Activated CD4-positive, alpha-beta memory T cell treated with anti-CD3 and anti-CD28 coated beads for 36 hours (primary cell): ENCODE measurements at regions of chr22 and their contacts with region 1.

Region 1: GRCh38 chr22:50507991-50508884 is at the start of gene NCAPH2:
- DNase-seq: peak; percentile 99
- H3K4me3 Mint-ChIP-seq: peak within 1 kb of the TSS; percentile 97
- H3K27ac Mint-ChIP-seq: peak within 1 kb of the TSS; percentile 97
- H3K4me1 Mint-ChIP-seq: peaks cover 20% of the 10 kb centered on the region
- H3K27me3 Mint-ChIP-seq: no peaks in the 10 kb centered on the region
- total RNA-seq, gene NCAPH2: 134 to 138 TPM

Region 2: GRCh38 chr22:50244420-50245213 is 263.6 kb before region 1 on chr22 and contains the start of gene TUBGCP6:
- CTCF ChIA-PET with region 1: interaction called, 3 read pairs
- POLR2A ChIA-PET with region 1: interaction called, 4 read pairs
- intact Hi-C with region 1: loop called (anchors 2 kb)
- DNase-seq: peak; percentile 95
- H3K4me3 Mint-ChIP-seq: peak within 1 kb of the TSS; percentile 91
- H3K27ac Mint-ChIP-seq: peak within 1 kb of the TSS; percentile 90
- H3K4me1 Mint-ChIP-seq: peaks cover 41% of the 10 kb centered on the region
- H3K27me3 Mint-ChIP-seq: no peaks in the 10 kb centered on the region
- total RNA-seq, gene TUBGCP6: 41.4 to 43.8 TPM

Region 3: GRCh38 chr22:50250555-50251476 is 257.4 kb before region 1 on chr22 and contains the start of gene HDAC10:
- CTCF ChIA-PET with region 1: no interaction called
- POLR2A ChIA-PET with region 1: interaction called, 10 read pairs
- intact Hi-C with region 1: no loop called
- DNase-seq: peak; percentile 91
- H3K4me3 Mint-ChIP-seq: peak within 1 kb of the TSS; percentile 84
- H3K27ac Mint-ChIP-seq: peak within 1 kb of the TSS; percentile 51
- H3K4me1 Mint-ChIP-seq: peaks cover 24% of the 10 kb centered on the region
- H3K27me3 Mint-ChIP-seq: no peaks in the 10 kb centered on the region
- total RNA-seq, gene HDAC10: 46.1 to 47.6 TPM

Region 4: GRCh38 chr22:50474668-50475492 is 33.4 kb before region 1 on chr22 and contains the start of gene SBF1:
- CTCF ChIA-PET with region 1: interaction called, 5 read pairs
- POLR2A ChIA-PET with region 1: interaction called, 7 read pairs
- intact Hi-C with region 1: loop called (anchors 2 kb)
- DNase-seq: peak; percentile 93
- H3K4me3 Mint-ChIP-seq: peak within 1 kb of the TSS; percentile 95
- H3K27ac Mint-ChIP-seq: peak within 1 kb of the TSS; percentile 78
- H3K4me1 Mint-ChIP-seq: peaks cover 47% of the 10 kb centered on the region
- H3K27me3 Mint-ChIP-seq: no peaks in the 10 kb centered on the region
- total RNA-seq, gene SBF1: 110 to 112 TPM

Region 5: DNA sequence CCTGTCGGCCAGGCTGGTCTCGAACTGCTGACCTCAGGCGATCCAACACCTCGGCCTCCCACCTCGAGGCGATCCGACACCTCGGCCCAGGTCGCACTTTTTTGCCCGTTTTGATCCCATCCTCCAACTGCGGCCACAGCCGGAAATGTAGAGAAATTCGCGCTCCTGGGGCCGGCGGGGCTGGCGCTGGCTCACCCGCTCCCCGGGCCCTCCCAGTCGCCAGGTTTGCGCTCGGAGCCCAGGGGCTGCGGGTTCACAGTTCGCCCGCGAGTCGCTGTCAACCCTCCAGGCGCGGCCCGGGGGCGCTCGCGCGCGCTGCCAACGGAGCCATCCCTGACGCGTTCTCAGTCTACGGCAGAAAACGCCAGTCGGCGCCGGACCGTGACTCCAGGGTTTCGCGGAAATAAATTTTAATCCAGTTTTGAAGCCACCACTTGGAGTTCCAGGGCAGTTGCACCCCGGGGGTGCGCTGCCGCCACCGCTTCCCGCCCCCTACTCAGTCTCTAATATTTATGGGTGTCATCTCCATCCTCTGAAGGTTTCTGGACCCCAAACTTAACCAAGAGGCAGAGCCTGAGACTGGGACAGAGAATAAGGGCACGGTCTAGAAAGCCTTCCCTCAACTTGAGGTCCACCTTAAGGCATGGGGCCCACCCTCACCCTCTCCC is 36.0 kb after region 1 on chr22:
- CTCF ChIA-PET with region 1: interaction called, 3 read pairs
- POLR2A ChIA-PET with region 1: interaction called, 17 read pairs
- intact Hi-C with region 1: loop called (anchors 1 kb)
- DNase-seq: peak; percentile 92
- H3K4me3 Mint-ChIP-seq: peak overlapping the region; percentile 59
- H3K27ac Mint-ChIP-seq: peak overlapping the region; percentile 76
- H3K4me1 Mint-ChIP-seq: peaks cover 57% of the 10 kb centered on the region
- H3K27me3 Mint-ChIP-seq: no peaks in the 10 kb centered on the region

Region 6: DNA sequence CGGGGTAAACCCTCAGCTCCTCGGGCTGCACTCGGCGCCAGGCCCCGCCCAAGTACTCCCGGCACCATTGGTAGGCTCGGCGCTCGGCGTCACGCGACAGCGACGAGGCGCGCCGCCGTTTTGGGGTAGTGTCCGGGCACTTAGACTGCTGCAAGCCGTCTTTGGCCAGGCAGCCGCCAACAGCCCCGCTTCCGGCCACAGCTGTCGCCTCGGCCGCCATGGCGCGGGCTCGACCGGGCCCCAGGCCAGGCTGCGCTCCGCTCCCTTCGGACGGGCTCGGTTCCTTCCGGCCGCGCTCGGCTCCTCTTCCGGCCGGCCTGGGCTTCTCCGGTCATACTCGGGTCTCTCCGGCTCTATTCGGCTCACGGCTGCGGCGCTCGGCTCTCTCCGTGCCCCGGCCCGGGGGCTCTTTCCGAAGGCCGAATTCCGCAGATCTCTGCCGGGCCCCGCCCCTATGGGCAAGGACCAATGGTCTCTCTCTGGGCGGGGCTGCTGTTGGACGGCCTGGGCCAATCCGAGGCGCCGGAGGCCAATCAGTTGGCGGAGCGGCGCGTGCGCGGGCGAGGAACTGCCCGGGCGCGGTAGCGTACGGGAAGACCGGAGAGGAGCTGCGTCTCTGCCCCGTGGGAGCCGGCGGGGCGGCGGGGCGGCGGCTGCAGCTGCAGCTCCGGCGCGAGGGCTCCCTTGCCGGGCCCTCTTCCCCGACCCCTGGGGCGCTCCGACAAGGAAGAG is 74.5 kb after region 1 on chr22 and contains the start of gene CHKB:
- CTCF ChIA-PET with region 1: no interaction called
- POLR2A ChIA-PET with region 1: interaction called, 3 read pairs
- intact Hi-C with region 1: loop called (anchors 1 kb)
- DNase-seq: peak; percentile 99
- H3K4me3 Mint-ChIP-seq: peak within 1 kb of the TSS; percentile 94
- H3K27ac Mint-ChIP-seq: peak within 1 kb of the TSS; percentile 87
- H3K4me1 Mint-ChIP-seq: peaks cover 21% of the 10 kb centered on the region
- H3K27me3 Mint-ChIP-seq: no peaks in the 10 kb centered on the region
- total RNA-seq, gene CHKB: 76.2 to 76.3 TPM